Naive thymus-derived CD4-positive, alpha-beta T cell (primary cell): ENCODE measurements at regions of chr20 and their contacts with region 1.

Region 1: DNA sequence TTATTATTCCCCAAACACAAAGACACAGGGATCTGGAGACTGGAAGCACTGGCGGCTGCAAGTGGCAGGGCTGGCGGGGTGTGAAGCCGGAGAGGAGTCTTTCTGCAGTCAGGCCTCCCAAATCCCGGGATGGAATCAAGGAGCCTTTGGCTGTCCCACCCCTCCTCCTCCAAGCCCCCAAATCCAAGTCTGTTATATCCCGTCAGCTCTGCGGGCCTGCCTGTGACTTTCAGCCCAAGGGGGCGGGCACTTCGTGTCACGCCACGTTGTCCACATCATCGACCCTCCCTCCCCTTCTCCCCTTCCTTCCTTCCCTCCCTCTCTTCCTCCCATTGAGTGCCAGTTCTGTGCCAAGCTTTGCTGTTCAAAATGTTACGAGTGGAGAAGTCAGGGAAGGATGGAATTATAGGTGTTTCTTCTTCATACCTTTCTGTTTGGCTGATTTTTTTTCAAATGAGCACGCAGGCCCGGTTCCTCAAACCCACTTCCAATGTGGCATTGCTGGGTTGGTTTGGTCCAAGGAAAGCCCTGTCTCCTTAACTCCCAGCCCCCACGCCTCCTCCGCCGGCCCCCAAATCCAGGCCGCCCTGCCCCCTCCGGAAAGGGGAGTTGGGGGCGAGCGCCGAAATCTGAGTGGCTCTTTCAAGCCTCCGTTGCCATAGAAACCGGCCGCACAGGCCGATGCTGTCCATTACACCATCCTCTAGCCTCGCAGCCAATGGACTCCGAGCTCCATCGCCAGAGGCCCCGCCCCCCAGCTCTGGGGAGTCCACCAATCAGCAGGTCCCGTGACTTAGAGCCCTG is 12.7 kb downstream of the ZCCHC3 start:
- DNase-seq: peak; percentile 66 to 84 (median 78)
- ATAC-seq: peak; percentile 100
- H3K4me3 ChIP-seq: peak overlapping the region; percentile 40
- H3K4me3 Mint-ChIP-seq: peak overlapping the region; percentile 81 to 90 (median 86)
- H3K27ac ChIP-seq: no peak overlapping the region
- H3K27ac Mint-ChIP-seq: peak overlapping the region; percentile 37 to 92 (median 81)
- H3K4me1 ChIP-seq: peaks cover 0 to 18% of the 10 kb centered on the region in 2 donors
- H3K4me1 Mint-ChIP-seq: peaks cover 11 to 25% (median 22%) of the 10 kb centered on the region in 7 donors
- H3K27me3 ChIP-seq: no peaks in the 10 kb centered on the region
- H3K27me3 Mint-ChIP-seq: peaks cover 0 to 3% (median 0%) of the 10 kb centered on the region in 5 donors

Region 2: DNA sequence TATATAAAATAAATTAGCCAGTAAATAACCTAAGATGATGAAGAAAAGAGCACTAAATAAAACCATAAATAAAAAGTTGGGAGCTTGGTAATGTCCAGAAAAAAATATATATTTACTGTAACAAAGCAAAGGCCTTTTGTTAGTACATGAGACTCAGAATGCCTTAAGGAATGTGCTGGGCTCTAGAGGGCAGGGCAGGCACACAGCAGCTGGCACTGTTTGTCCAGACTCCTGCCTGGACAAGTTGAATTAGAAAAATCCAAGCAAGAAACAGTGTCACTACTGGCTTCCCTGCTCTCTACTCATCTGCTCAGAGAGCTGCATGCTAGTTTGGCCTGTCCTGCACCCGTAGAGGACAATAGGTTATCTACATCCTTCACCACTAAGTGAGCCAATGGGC is 74.2 kb before region 1 on chr20:
- CTCF ChIA-PET with region 1: no interaction called
- POLR2A ChIA-PET with region 1: no interaction called
- intact Hi-C with region 1: no loop called
- DNase-seq: no peak
- ATAC-seq: no peak
- H3K4me3 ChIP-seq: no peak overlapping the region
- H3K4me3 Mint-ChIP-seq: peak overlapping the region in 3 of 10 donors; percentile 38 to 85 (median 82)
- H3K27ac ChIP-seq: no peak overlapping the region
- H3K27ac Mint-ChIP-seq: peak overlapping the region in 4 of 9 donors; percentile 39 to 91 (median 84)
- H3K4me1 ChIP-seq: peaks cover 0 to 21% of the 10 kb centered on the region in 2 donors
- H3K4me1 Mint-ChIP-seq: peaks cover 9 to 33% (median 27%) of the 10 kb centered on the region in 7 donors
- H3K27me3 ChIP-seq: no peaks in the 10 kb centered on the region
- H3K27me3 Mint-ChIP-seq: no peaks in the 10 kb centered on the region

Region 3: DNA sequence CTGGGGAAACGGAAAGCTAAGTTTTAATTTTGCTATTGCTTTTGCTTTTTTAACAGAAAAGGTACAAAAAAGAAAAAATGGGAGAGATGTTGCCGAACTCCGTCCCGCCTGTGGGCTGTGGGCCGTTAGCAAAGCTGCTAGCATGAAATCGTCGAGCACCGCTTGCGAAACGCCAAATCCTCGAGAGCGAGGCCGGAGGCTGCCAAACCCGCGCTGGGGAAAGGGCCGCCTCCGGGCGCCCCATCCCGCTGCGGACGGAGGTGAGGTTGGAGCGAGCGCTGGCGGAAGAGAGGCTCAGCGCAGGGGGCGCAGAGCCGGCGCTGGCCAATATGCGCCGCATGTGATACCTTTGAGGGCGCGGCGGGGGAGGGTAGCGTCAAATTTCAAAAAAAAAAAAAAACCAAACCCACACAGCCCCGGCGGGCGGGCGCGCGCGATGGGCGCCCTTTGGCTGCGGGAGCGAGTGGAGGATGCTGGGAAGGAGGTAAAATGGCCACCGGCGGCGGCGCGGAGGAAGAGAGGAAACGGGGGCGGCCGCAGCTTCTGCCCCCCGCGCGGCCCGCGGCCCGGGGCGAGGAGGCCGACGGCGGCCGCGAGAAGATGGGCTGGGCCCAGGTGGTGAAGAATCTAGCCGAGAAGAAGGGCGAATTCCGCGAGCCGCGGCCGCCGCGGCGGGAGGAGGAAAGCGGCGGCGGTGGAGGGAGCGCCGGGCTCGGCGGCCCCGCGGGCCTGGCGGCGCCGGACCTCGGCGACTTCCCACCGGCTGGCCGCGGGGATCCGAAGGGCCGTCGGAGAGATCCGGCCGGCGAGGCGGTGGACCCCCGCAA is 12.7 kb before region 1 on chr20 and contains the start of gene ZCCHC3:
- CTCF ChIA-PET with region 1: interaction called, 3 read pairs
- POLR2A ChIA-PET with region 1: interaction called, 38 read pairs
- intact Hi-C with region 1: loop called (anchors 1 kb)
- DNase-seq: peak; percentile 72 to 89 (median 84)
- ATAC-seq: peak; percentile 94
- H3K4me3 ChIP-seq: peak within 1 kb of the TSS; percentile 96
- H3K4me3 Mint-ChIP-seq: peak within 1 kb of the TSS; percentile 92 to 100 (median 98)
- H3K27ac ChIP-seq: peak within 1 kb of the TSS; percentile 91
- H3K27ac Mint-ChIP-seq: peak within 1 kb of the TSS; percentile 94 to 100 (median 97)
- H3K4me1 ChIP-seq: peaks cover 14 to 21% of the 10 kb centered on the region in 2 donors
- H3K4me1 Mint-ChIP-seq: peaks cover 33 to 51% (median 40%) of the 10 kb centered on the region in 7 donors
- H3K27me3 ChIP-seq: no peaks in the 10 kb centered on the region
- H3K27me3 Mint-ChIP-seq: peaks cover 0 to 2% (median 0%) of the 10 kb centered on the region in 5 donors
- total RNA-seq, gene ZCCHC3: 14.6 to 31.9 (median 27.1) TPM